PC-9 (cell line): ENCODE measurements at regions of chr6 and their contacts with region 1.

Region 1: DNA sequence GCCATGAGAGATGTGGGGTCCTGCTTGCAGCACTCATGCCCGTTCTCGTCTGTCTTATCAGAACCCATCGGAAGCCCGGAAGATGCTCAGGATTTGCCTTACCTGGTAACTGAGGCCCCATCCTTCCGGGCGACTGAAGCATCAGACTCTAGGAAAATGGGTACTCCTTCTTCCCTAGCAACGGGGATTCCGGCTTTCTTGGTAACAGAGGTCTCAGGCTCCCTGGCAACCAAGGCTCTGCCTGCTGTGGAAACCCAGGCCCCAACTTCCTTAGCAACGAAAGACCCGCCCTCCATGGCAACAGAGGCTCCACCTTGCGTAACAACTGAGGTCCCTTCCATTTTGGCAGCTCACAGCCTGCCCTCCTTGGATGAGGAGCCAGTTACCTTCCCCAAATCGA is 8.3 kb downstream of the PI16 start:
- DNase-seq: peak in 1 of 2 experiments; percentile 50
- H3K4me3 ChIP-seq: no peak overlapping the region
- H3K27ac ChIP-seq: no peak overlapping the region
- H3K4me1 ChIP-seq: peaks cover 17% of the 10 kb centered on the region
- H3K27me3 ChIP-seq: no peaks in the 10 kb centered on the region
- CTCF ChIP-seq: no peak

Region 2: DNA sequence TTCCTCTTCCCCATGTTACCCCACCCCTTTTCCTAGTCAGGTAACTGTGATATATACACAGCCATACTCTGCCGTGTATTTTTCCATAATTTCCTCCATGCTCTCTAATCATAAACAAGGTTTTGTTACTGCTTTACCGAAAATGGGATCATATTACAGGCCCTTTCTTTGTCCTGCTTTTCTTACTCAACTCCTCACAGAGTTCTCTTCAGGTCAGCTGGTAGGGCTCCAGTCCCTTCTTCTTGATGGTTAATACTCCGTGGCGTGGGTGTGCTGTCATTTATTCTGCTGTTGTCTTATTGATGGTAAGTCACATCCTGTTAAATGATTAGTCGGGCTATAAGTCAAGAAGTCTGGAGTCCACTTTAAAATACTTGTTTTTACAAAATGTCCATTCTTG is 33.3 kb before region 1 on chr6:
- CTCF ChIA-PET with region 1: no interaction called
- POLR2A ChIA-PET with region 1: no interaction called
- intact Hi-C with region 1: loop called (anchors 5 kb)
- DNase-seq: peak in 1 of 2 experiments; percentile 69
- H3K4me3 ChIP-seq: no peak overlapping the region
- H3K27ac ChIP-seq: peak overlapping the region; percentile 4; the same call in 1 of the 2 replicates
- H3K4me1 ChIP-seq: peaks cover 49% of the 10 kb centered on the region
- H3K27me3 ChIP-seq: no peaks in the 10 kb centered on the region
- CTCF ChIP-seq: no peak